Activated T-helper 1 cell treated with anti-CD3 and anti-CD28 coated beads, Interleukin-12 subunit alpha, Interleukin-12 subunit beta, Interleukin-2, Interleukin-4 antibody, amounts not matched to agents 30 ng/mL and 10 ng/mL and 1 ng/mL, durations not matched to agents 14 hours and 24 hours and 36 hours (primary cell): ENCODE measurements at regions of chr5 and their contacts with region 1.

Region 1: DNA sequence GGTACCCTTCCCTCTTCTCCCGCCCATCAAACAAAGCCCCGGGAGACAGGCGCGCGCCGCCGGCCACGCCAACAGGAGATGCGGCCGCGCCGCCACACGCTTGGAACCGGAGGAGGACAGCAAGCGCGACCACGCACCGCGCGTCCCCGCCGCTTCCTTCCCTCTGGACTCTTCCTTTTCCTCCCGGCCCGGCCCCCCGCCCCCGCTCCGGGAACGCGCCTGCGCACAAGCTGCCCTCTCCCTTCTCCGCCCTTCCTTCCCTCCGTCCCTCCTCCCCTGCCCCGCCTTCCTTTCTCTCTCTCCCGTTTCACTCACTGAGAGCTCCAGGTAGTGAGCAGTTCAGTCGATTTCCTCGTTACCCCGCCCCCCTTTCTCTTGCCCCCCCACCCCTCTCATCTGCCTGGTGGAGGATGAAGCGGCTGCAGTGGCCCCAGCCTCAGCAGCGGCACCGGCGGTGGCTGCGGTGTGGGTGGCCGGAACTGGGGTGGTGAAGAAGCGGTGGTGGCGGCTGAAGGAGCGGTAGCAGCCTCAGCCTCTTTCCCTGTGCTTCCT is at the start of gene RASA1:
- DNase-seq: peak; percentile 74
- H3K4me3 Mint-ChIP-seq: peak within 1 kb of the TSS; percentile 99
- H3K27ac Mint-ChIP-seq: peak within 1 kb of the TSS; percentile 90
- H3K4me1 Mint-ChIP-seq: peaks cover 22% of the 10 kb centered on the region
- H3K27me3 Mint-ChIP-seq: peaks cover 14% of the 10 kb centered on the region
- total RNA-seq, gene RASA1: 20.7 and 21.3 TPM in 2 replicates

Region 2: DNA sequence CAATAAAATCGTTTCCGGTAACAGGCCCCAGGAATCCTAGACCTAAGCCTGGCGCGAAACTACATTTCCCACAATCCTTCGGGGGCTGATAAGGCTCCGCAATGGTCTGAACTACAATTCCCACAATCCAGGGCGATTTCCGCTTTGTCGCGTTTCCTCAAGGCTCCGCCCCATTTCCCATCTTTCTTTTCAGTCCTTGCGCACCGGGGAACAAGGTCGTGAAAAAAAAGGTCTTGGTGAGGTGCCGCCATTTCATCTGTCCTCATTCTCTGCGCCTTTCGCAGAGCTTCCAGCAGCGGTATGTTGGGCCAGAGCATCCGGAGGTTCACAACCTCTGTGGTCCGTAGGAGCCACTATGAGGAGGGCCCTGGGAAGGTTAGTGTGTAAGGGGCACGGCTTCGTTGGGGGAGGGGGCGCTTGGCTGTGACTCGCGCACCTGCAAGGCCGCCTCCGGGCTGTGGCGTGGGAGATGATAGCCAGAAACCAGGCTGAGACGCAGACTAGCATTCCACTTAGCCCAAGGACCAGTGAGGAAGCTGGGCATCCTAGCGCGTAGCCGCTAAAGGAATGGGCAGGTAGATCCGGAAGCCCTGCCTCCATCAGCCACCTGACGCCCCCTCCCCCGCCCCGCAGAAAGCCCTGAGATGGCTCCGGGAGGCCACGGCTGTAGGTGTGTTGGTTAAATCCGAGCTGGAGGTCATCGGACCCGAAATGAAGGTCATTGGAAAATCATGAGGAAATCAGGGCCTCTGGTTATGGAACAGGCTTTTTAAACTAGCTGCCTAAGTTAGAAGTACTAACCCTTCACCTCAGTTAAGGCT is 649.7 kb before region 1 on chr5 and contains the start of gene COX7C:
- intact Hi-C with region 1: loop called (anchors 1 kb)
- DNase-seq: peak; percentile 90
- H3K4me3 Mint-ChIP-seq: peak within 1 kb of the TSS; percentile 98
- H3K27ac Mint-ChIP-seq: peak within 1 kb of the TSS; percentile 95
- H3K4me1 Mint-ChIP-seq: peaks cover 16% of the 10 kb centered on the region
- H3K27me3 Mint-ChIP-seq: peaks cover 7% of the 10 kb centered on the region
- total RNA-seq, gene COX7C: 436 and 471 TPM in 2 replicates

Region 3: DNA sequence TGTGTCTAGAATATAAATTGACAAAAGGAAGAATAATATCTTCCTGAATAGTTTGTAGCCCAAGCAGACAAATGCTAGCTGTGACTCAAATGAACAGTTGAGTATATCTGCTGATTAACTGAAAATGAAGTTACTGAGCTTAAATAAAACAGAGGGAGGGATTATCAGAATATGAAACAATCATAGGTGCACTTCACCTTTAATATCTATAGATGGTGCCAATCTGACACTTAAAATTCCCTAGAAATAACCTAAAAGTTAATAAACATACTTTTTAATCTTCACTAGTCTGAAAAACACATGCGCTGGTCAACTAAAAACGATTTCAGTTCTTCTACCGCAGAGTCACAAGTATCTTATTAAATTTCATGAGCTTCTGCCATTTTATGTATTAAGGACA is 280.8 kb before region 1 on chr5:
- intact Hi-C with region 1: no loop called
- DNase-seq: no peak
- H3K4me3 Mint-ChIP-seq: no peak overlapping the region
- H3K27ac Mint-ChIP-seq: no peak overlapping the region
- H3K4me1 Mint-ChIP-seq: no peaks in the 10 kb centered on the region
- H3K27me3 Mint-ChIP-seq: peaks cover 15% of the 10 kb centered on the region

Region 4: GRCh38 chr5:87002485-87002884 is 265.2 kb before region 1 on chr5:
- intact Hi-C with region 1: no loop called
- DNase-seq: no peak
- H3K4me3 Mint-ChIP-seq: no peak overlapping the region
- H3K27ac Mint-ChIP-seq: no peak overlapping the region
- H3K4me1 Mint-ChIP-seq: no peaks in the 10 kb centered on the region
- H3K27me3 Mint-ChIP-seq: peaks cover 22% of the 10 kb centered on the region

Region 5: DNA sequence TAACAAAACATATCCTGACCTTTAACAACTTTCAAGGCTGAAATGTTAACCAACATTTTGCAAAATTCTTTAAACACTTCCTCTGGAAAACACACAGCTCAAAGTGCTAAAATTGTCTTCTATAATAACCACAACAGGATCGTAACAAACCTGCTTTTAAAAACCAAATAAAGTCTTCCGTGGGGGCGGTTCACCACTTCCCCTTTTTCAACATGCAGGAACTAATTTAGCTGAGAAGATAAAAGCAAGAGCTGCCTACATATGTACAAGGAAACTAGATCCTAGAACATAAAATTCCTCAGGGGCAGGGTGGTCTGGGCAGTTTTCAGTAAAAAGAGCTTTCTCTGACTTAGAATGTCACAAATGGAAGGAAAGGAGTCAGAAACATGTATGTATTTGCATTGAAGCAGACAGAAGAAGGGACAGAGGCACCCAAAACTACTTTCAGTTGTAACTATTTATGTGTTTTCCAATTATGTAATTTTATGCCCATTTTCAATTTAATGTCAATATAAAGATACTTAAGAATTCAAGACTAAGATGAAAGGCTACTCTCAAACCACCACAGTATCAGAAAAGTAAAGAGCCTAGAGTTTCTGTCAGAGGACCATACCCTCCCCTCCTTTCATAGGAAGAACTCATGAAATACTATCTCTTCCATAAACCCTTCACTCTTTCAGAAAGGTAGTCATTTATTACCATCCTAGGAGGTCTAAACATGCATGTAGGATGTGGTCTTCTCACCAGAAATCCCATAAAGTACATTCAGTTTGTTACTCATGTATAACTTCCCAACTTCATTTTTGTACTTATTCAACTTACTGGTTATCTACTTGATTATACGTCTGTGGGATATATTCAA is 185.9 kb before region 1 on chr5:
- intact Hi-C with region 1: loop called (anchors 1 kb)
- DNase-seq: peak; percentile 41
- H3K4me3 Mint-ChIP-seq: peak overlapping the region; percentile 65
- H3K27ac Mint-ChIP-seq: peak overlapping the region; percentile 73
- H3K4me1 Mint-ChIP-seq: peaks cover 55% of the 10 kb centered on the region
- H3K27me3 Mint-ChIP-seq: no peaks in the 10 kb centered on the region

Region 6: GRCh38 chr5:87231037-87231819 is 36.4 kb before region 1 on chr5:
- intact Hi-C with region 1: loop called (anchors 2 kb)
- DNase-seq: no peak
- H3K4me3 Mint-ChIP-seq: no peak overlapping the region
- H3K27ac Mint-ChIP-seq: no peak overlapping the region
- H3K4me1 Mint-ChIP-seq: peaks cover 5% of the 10 kb centered on the region
- H3K27me3 Mint-ChIP-seq: peaks cover 3% of the 10 kb centered on the region

Region 7: DNA sequence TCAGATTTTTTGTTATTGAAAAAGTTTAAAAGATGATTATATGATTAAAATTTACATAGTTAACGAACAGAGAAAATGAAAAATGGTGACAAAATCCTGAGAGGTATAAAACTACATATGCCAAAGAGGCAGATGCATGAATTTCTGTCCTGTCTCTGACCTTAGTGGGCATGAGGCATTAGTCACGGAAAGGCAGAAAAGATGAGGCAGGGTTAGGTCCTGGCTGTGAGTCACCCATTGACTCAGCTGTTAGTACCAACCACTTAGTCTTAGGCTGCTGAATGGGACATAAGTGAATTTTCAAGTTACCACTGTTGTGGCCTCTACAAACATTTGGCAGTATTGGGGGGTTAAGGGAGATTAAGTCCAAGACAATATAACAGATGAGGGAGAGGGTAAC is 33.1 kb after region 1 on chr5:
- intact Hi-C with region 1: loop called (anchors 1 kb)
- DNase-seq: no peak
- H3K4me3 Mint-ChIP-seq: no peak overlapping the region
- H3K27ac Mint-ChIP-seq: peak overlapping the region; percentile 70
- H3K4me1 Mint-ChIP-seq: peaks cover 53% of the 10 kb centered on the region
- H3K27me3 Mint-ChIP-seq: no peaks in the 10 kb centered on the region

Region 8: GRCh38 chr5:87400305-87400899 is 132.8 kb after region 1 on chr5:
- intact Hi-C with region 1: loop called (anchors 1 kb)
- DNase-seq: no peak
- H3K4me3 Mint-ChIP-seq: no peak overlapping the region
- H3K27ac Mint-ChIP-seq: no peak overlapping the region
- H3K4me1 Mint-ChIP-seq: peaks cover 24% of the 10 kb centered on the region
- H3K27me3 Mint-ChIP-seq: no peaks in the 10 kb centered on the region

Region 9: GRCh38 chr5:88140856-88141752 is 873.5 kb after region 1 on chr5:
- intact Hi-C with region 1: loop called (anchors 5 kb)
- DNase-seq: peak; percentile 89
- H3K4me3 Mint-ChIP-seq: no peak overlapping the region
- H3K27ac Mint-ChIP-seq: no peak overlapping the region
- H3K4me1 Mint-ChIP-seq: peaks cover 24% of the 10 kb centered on the region
- H3K27me3 Mint-ChIP-seq: peaks cover 32% of the 10 kb centered on the region